G401 (cell line): ENCODE measurements at regions of chr20 and their contacts with region 1.

Region 1: DNA sequence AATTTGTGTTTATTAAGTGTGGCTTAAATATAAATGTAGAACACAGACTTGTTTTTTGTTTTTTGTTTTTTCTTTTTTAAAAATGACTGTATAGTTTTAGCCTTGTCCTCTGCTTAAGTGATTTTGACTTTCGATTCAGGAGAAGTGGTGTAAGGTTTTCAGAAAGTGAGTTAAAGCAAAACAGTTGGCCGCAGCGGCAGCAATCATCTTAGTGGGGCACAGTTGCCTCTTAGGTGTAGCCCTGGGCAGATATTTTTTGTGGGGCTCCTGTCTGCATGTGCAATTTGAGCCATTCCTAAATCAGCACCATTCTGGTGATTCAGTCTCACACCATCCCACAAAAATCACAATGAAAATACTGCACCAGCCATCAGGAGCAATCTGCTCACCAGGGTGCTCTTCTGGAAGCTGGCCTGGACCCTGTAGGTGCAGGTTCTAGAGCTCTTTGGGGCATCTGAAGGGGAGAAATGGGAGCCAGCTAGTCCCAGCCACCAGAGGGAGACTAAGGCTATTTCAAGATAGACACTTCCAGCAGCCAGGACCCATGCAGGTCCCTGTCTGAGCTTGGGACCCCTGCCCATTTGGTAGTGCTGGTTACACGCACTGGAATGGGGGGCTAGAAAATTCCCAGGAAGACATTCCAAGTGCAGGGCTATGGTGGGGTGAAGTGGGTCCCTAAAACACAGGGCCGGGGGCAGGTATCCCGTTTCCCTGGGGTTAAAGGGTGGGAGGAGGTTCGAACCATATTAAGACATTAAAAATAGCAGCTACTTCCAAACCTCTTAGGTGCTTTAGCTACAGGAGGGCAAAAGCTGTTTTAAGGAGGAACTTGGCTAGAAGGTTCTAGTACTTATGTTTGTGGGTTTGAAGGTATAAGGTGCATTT is 156.6 kb downstream of the NFATC2 start:
- DNase-seq: peak; percentile 13

Region 2: GRCh38 chr20:51595058-51595532 is 209.2 kb after region 1 on chr20:
- in situ Hi-C with region 1: loop called (anchors 25 kb)
- DNase-seq: peak; percentile 92